ENCODE measurements at regions of chr22 and their contacts with region 1.

Region 1: DNA sequence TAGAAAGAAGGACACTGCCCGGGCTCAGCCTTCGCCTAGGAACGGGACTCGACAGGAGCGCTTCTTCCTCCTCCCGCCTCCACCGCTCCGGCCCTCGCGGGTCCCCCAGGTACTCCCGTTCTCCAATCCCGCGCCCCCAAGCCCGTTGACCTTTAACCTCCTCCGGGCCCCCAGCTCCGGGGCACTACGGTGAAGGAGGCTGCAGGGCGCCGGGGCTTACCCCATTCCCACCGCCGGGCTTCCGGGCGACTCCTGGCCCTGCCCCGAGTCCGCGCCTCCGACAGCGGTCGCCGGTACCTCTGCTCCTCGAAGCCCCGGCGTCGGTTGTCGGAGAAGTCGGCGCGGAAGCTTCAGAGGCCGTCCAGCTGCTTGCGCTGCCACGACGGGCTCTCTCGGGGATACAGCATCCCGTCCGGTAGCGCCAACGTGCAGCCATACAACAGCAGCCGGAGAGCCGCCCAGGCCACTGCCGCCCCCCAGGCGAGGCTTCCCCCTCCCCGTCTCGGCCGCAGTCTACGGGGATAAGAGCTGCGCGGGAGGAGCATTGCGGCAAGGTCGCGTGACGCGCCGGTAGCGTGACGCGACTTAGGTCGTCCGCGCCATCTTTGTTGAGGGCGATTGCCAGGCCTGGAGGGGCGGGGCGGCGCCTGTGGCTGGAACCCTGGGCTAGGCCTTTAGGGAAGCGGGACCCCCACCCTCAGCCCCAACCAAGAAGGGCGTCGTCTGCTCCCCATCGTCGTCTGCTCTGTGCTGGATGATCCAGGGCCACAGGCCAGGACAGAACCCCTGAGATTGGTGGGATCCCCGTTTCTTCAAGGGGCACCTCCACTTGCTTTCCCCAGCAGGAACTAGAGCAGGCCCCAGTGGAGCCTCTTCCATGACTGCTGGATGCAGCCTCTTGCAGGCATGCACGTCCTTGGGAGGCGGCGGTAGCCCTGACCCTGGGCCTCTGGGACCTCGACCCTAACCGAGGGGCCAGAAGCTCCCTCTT is 26.3 kb downstream of the RGL4 start:
- DNase-seq: peak; percentile 94
- H3K4me3 ChIP-seq: peak overlapping the region; percentile 79
- H3K27ac ChIP-seq: peak overlapping the region; percentile 38
- H3K4me1 ChIP-seq: peaks cover 15% of the 10 kb centered on the region
- CTCF ChIP-seq: no peak

Region 2: GRCh38 chr22:23750714-23751440 is 33.8 kb after region 1 on chr22 and contains the start of gene ZNF70:
- CTCF ChIA-PET with region 1: no interaction called
- POLR2A ChIA-PET with region 1: interaction called, 3 read pairs
- intact Hi-C with region 1: loop called (anchors 1 kb)
- DNase-seq: peak; percentile 94
- H3K4me3 ChIP-seq: peak within 1 kb of the TSS; percentile 78
- H3K27ac ChIP-seq: peak within 1 kb of the TSS; percentile 95
- H3K4me1 ChIP-seq: peaks cover 40% of the 10 kb centered on the region
- CTCF ChIP-seq: peak; percentile 50
- total RNA-seq, gene ZNF70: 5.1 and 6.0 TPM in 2 replicates